OCI-LY7 (cell line): ENCODE measurements at regions of chr16 and their contacts with region 1.

Region 1: GRCh38 chr16:27083861-27084261 is 17.1 kb downstream of the C16orf82 start:
- DNase-seq: peak; percentile 10
- H3K4me3 ChIP-seq: no peak overlapping the region
- H3K27ac ChIP-seq: no peak overlapping the region
- H3K4me1 ChIP-seq: no peaks in the 10 kb centered on the region
- CTCF ChIP-seq: no peak

Region 2: DNA sequence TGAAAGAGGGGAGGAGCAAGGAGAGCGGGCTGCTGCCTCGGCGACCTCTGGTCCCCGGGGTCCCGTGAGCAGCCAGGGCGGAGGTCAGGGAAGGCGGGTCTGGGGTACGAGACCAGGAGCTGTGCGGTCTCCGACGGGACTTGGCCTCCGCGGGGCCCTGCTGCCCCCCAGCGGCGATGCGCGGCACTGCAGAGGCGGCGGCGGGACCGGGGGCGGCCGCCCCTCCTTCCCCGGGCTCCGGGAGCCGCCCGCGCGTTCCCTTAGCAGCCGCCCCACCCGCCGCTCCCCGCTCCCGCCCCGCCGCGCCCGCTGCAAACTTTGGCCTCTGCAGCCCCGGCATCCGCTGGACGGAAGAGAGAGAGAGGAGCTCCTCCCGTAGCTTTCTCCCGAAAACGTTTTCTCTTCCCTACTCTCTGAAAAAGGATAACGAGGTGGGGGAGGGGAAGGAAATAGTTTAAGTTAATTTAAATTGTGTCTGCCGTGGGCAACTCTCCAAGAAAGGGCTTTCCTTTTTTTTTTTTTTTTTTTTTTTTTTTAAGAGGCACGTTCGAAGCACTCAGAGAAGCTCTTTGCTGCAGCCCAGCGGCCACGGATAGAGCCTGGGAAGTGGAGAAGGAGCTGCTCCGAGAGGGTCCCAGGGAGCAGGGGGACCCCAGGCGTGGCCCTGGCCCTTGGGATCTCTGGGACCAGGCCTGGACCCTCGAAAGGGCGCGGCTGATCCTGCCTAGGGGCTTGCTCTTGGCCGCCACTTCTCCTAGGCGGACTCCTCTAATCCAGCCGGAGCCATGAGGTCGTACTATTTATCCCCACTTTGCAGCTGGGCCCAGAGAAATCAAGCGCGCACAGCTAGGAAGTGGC is 26.0 kb after region 1 on chr16:
- CTCF ChIA-PET with region 1: interaction called, 11 read pairs
- POLR2A ChIA-PET with region 1: no interaction called
- intact Hi-C with region 1: no loop called
- DNase-seq: peak; percentile 75
- H3K4me3 ChIP-seq: peak overlapping the region; percentile 62
- H3K27ac ChIP-seq: no peak overlapping the region
- H3K4me1 ChIP-seq: peaks cover 30% of the 10 kb centered on the region
- CTCF ChIP-seq: peak; percentile 77